Activated T-helper 1 cell treated with anti-CD3 and anti-CD28 coated beads, Interleukin-12 subunit alpha, Interleukin-12 subunit beta, Interleukin-2, Interleukin-4 antibody, amounts not matched to agents 30 ng/mL and 10 ng/mL and 1 ng/mL, durations not matched to agents 14 hours and 24 hours and 36 hours (primary cell): ENCODE measurements at regions of chr17 and their contacts with region 1.

Region 1: DNA sequence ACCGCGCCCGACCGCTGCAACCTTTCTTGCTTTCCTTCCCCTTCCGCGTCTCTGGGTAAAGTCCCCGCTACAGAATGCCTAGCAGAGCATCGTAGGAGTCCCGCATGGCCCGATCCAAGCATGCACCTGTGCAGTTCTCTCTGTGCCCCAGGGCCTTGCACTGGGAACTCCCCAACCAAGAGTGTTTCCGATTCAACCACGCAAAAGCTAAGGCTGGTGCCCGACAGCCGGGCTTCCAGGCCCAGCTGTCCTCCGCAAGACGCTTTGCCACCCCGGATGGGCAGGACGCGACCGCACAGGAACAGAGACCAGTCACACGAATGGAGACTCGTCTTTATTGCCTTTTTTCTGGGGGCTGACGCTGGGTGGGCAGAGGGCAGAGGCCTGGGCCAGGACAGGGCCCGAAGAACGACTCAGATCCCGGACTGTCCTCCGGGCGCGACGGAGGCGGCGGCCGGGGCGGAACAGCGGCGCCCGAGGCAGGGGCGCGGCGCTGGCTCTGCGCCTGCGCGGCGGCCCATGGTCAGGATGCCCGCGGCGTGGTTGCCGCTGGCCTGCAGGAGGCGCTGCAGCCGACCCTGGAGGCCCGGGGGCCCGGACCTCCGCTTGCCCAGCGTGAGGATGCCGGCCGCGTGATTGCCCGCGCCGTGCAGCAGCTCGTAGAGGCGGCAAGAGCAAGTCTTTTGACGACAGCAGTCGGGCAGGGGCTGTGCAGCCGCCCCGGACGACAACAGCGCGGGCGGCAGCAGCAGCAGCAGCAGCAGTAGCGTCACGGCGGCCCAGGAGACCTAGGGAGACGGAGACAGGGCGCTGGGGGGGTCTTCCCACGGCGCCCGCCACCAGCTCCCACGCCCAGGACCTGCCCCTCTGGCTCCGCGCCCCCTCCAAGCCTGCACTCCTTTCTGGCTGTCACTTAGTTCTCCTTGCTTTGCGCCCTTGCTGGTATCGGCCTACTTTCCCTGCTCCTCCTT is 1.2 kb downstream of the HCRT start:
- DNase-seq: peak; percentile 80
- H3K4me3 Mint-ChIP-seq: peak overlapping the region; percentile 94
- H3K27ac Mint-ChIP-seq: peak overlapping the region; percentile 95
- H3K4me1 Mint-ChIP-seq: peaks cover 50% of the 10 kb centered on the region
- H3K27me3 Mint-ChIP-seq: peaks cover 13% of the 10 kb centered on the region

Region 2: DNA sequence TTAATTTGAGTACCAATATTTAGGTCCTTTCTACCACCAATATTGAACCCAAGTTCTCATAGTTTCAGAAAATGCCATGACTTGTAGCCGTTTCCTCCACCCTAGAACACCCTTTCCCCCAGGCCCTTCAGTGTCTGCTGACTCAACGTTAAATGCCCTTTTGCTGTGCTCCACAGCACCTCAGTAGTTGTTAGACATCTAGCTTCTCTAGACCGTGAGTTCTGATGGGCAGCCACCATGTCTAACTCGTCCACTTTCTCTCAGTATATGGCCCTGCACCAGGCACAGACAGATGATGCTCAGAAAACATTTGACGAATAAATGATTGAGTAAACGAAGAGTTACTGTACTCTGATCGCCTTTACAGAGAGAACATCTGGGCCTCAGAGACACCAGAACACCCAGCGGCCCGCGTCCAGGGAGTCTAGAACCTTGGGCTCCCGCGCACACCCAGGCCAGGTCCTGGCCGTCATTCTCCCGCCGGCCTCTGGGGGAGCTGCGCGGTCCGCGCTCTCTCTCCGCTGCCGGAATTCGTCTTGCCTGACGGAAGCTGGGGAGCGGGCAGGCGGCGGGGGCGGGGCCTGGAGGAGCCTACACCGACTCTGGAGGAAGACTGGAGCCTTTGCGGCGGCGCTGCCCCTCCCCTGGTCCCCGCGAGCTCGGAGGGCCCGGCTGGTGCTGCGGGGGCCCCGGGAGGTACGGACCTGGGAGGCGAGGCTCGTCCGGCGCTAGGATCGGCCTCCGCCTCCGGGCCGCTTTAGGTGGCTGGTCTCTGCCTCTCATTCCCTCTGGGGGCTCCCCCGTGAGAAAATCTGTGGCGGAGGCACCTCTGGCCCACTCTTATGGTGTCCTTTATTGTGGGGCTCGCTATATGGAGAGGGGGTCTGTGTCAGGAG is 164.3 kb before region 1 on chr17 and contains the start of gene NKIRAS2:
- intact Hi-C with region 1: loop called (anchors 2 kb)
- DNase-seq: peak; percentile 93
- H3K4me3 Mint-ChIP-seq: peak within 1 kb of the TSS; percentile 100
- H3K27ac Mint-ChIP-seq: peak within 1 kb of the TSS; percentile 81
- H3K4me1 Mint-ChIP-seq: peaks cover 53% of the 10 kb centered on the region
- H3K27me3 Mint-ChIP-seq: no peaks in the 10 kb centered on the region
- total RNA-seq, gene NKIRAS2: 32.6 and 36.3 TPM in 2 replicates

Region 3: DNA sequence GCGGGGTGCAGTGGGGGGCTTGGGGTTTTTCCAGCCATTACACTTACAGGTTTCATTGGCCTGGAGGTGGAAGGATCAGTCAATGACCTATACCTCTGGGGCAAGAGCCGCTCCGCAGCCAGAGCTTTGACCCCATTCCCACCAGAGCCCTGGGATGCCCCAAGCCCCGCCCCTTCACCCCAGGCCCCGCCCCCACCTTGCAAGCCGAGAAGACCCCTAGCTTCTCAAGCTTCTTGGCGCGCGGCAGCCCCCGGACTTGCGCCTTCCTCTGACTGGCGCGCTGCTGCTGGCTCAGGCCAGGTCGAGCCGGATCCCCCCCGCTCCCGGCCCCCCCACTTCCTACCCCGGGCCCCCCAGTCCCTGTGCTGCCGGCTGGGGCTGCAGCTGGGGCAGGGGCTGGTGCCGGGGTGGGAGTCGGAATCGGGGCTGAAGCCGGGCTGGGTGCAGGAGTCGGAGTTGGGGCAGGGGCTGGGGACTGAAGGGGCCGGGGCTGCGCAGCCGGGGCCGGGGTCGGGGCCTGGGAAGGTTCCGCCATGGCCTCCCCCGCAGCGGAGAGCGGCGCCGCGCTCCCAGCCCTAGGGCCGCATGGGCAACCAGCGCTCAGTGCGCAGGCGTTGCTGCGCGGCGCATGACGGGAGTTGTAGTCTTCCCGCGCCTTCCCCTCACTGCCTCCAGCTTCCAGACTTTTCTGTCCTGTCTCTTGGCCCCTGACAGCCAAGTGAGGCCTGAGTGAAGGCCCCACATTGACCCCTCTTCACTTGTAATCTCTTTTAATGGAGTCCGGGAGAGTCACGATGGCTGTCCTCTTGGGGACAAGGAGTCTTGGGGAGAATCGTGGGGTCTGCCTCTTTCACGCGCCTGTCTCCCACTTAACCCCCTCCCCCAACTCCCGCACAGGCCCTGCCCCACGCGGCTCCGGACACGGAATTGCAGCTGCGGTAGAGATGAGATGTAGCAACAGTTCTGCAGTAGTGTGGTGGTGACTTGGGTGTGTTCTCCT is 63.0 kb before region 1 on chr17 and contains the start of gene KAT2A:
- intact Hi-C with region 1: loop called (anchors 2 kb)
- DNase-seq: peak; percentile 68
- H3K4me3 Mint-ChIP-seq: peak within 1 kb of the TSS; percentile 81
- H3K27ac Mint-ChIP-seq: peak within 1 kb of the TSS; percentile 86
- H3K4me1 Mint-ChIP-seq: peaks cover 36% of the 10 kb centered on the region
- H3K27me3 Mint-ChIP-seq: no peaks in the 10 kb centered on the region
- total RNA-seq, gene KAT2A: 70.8 and 76.9 TPM in 2 replicates

Region 4: GRCh38 chr17:42193969-42194899 is 10.2 kb after region 1 on chr17 and contains the start of gene GHDC:
- intact Hi-C with region 1: loop called (anchors 1 kb)
- DNase-seq: peak; percentile 80
- H3K4me3 Mint-ChIP-seq: peak within 1 kb of the TSS; percentile 96
- H3K27ac Mint-ChIP-seq: peak within 1 kb of the TSS; percentile 95
- H3K4me1 Mint-ChIP-seq: peaks cover 15% of the 10 kb centered on the region
- H3K27me3 Mint-ChIP-seq: no peaks in the 10 kb centered on the region
- total RNA-seq, gene GHDC: 15.2 and 15.5 TPM in 2 replicates

Region 5: GRCh38 chr17:42266918-42267778 is 83.1 kb after region 1 on chr17:
- intact Hi-C with region 1: loop called (anchors 5 kb)
- DNase-seq: peak; percentile 52
- H3K4me3 Mint-ChIP-seq: peak overlapping the region; percentile 73
- H3K27ac Mint-ChIP-seq: peak overlapping the region; percentile 98
- H3K4me1 Mint-ChIP-seq: peaks cover 67% of the 10 kb centered on the region
- H3K27me3 Mint-ChIP-seq: no peaks in the 10 kb centered on the region

Region 6: DNA sequence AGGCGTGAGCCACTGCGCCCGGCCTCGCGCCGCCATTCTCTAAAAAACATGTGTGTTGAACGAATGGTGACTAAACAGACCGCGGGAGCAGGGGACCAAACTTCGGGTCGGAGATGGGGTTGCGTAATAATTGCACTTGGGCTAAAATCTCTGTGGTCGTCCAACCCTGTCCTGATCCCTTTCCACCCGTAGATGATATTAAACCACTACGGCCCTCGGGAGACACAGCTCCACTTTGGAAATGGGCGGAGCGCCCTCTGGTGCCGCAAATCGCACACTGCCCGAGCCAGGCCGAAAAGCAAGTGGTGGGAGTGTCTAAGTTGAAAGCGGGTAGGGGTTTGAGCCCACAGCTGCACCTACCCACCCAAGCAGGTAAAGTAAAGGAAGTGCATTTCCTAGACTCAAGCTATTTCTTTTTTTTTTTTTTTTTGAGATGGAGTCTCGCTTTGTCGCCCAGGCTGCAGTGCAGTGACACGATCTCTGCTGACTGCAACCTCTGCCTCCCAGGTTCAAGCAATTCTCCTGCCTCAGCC is 222.0 kb after region 1 on chr17:
- intact Hi-C with region 1: loop called (anchors 5 kb)
- DNase-seq: peak; percentile 73
- H3K4me3 Mint-ChIP-seq: no peak overlapping the region
- H3K27ac Mint-ChIP-seq: no peak overlapping the region
- H3K4me1 Mint-ChIP-seq: peaks cover 28% of the 10 kb centered on the region
- H3K27me3 Mint-ChIP-seq: peaks cover 8% of the 10 kb centered on the region